Activated B cell treated with CpG ODN at 0.5 μM for 24 hours (primary cell): ENCODE measurements at regions of chr2 and their contacts with region 1.

Region 1: DNA sequence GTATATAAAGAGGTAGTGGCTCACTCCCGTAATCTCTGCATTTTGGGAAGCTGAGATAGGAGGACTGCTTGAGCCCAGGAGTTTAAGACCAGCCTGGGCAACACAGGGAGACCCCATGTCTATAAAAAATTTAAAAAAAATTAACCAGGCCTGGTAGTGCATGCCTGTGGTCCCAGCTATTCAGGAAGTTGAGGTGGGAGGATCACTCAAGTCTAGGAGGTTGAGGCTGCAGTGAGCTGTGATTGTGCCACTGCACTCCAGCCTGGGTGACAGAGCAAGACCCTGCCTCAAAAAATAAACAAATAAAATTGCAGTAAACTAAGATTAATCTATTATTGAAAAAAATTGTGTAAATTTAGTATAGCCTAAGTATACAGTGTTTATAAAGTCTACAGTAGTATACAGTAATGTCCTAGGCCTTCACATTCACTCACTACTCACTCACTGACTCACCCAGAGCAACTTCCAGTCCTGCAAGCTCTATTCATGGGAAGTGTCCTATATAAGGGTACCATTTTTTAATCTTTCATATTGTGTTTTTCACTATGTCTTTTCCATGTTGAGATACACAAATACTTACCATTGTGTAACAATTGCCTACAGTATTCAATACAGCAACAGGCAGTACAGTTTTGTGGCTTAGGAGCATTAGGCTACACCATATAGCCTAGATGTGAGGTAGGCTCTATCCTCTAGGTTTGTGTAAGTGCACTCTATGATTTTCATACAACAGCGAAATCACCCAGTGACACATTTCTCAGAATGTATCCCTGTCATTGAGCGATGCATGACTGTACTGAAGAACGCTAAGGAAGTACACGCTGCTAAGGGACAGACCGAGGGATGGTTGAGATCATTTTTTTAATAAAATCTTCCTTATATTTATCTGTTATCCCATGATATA is 10.4 kb upstream of the MAP4K3 start:
- DNase-seq: no peak
- ATAC-seq: no peak
- H3K4me3 Mint-ChIP-seq: no peak overlapping the region
- H3K27ac Mint-ChIP-seq: no peak overlapping the region
- H3K4me1 Mint-ChIP-seq: no peaks in the 10 kb centered on the region
- H3K27me3 Mint-ChIP-seq: no peaks in the 10 kb centered on the region
- CTCF ChIP-seq: no peak

Region 2: GRCh38 chr2:39464864-39465263 is 17.3 kb after region 1 on chr2:
- CTCF ChIA-PET with region 1: no interaction called
- POLR2A ChIA-PET with region 1: interaction called, 13 read pairs
- intact Hi-C with region 1: no loop called
- DNase-seq: no peak
- ATAC-seq: no peak
- H3K4me3 Mint-ChIP-seq: no peak overlapping the region
- H3K27ac Mint-ChIP-seq: no peak overlapping the region
- H3K4me1 Mint-ChIP-seq: peaks cover 13% of the 10 kb centered on the region
- H3K27me3 Mint-ChIP-seq: no peaks in the 10 kb centered on the region
- CTCF ChIP-seq: no peak